ENCODE measurements at regions of chr7 and their contacts with region 1.

Region 1: DNA sequence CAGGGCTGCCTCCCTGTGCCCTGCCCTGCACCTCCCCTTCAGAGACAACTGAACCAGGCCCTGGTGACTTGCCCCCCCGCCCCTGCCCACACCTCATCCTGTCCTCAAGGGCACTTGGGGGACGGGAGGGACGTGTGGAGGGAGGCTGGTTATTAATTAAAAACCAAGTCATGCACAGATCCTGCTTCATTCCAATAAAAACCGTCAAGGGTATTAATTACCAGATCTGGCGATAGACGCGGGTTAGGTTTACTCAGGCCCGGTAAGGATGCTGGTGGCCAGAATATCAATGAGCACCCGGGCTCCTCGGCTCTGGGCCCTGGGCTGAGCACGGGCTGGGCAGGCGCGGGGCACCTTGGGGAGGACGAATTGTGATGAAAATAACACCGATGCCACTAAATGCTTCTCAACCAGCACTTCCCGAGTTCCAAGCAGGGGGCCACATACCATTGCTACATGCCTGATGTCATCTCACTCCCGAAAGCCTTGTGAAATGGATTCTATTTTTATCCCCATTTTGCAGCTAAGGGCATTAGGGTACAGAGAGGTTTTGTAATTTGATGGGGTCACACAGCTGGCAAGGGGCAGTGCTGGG is 24.5 kb upstream of the GTF2IRD1 start:
- DNase-seq: no peak
- ATAC-seq: peak in 3 of 4 donors; percentile 66 to 83 (median 70)
- H3K4me3 ChIP-seq: no peak overlapping the region
- H3K27ac ChIP-seq: no peak overlapping the region
- H3K4me1 ChIP-seq: peaks cover 14% of the 10 kb centered on the region
- H3K27me3 ChIP-seq: no peaks in the 10 kb centered on the region
- CTCF ChIP-seq: no peak

Region 2: GRCh38 chr7:74457007-74457406 is 27.8 kb after region 1 on chr7:
- intact Hi-C with region 1: loop called in 1 of 2 experiments (anchors 1 kb)
- DNase-seq: no peak
- ATAC-seq: no peak
- H3K4me3 ChIP-seq: no peak overlapping the region
- H3K27ac ChIP-seq: peak overlapping the region; percentile 93
- H3K4me1 ChIP-seq: peaks cover 33% of the 10 kb centered on the region
- H3K27me3 ChIP-seq: no peaks in the 10 kb centered on the region
- CTCF ChIP-seq: no peak

Region 3: DNA sequence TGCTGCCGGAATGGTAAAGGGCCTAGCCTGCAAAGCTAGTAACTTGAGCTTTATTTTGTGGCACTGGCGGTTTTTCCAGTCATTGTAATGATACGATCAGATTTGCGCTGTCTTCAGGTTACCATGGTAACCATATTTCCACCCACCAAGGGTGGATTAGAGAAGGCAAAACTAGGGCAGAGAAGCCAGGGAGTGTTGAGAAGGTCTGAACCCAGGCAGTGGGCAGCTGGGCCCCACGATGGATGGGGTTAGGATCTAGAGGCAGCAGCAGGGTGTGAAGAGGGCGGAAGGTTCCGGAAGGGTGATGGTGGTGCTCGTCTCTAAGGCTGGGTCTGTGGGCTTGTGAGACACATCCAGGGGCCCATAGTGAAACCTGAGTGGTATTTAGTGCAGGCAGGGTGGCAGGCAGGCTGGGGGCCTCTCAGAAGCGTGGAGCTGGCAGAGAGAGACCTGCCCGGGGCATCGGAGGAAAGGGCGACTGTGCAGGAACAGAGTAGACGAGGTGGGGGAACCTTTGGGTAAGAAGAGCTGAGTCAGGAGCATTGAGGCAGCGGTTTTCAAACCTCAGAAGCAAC is 140.3 kb after region 1 on chr7:
- intact Hi-C with region 1: loop called in 1 of 2 experiments (anchors 5 kb)
- DNase-seq: no peak
- ATAC-seq: no peak
- H3K4me3 ChIP-seq: no peak overlapping the region
- H3K27ac ChIP-seq: no peak overlapping the region
- H3K4me1 ChIP-seq: no peaks in the 10 kb centered on the region
- H3K27me3 ChIP-seq: no peaks in the 10 kb centered on the region
- CTCF ChIP-seq: no peak